Esophagus muscularis mucosa (tissue), 4 donors: ENCODE measurements at regions of chr2 and their contacts with region 1.

Region 1: DNA sequence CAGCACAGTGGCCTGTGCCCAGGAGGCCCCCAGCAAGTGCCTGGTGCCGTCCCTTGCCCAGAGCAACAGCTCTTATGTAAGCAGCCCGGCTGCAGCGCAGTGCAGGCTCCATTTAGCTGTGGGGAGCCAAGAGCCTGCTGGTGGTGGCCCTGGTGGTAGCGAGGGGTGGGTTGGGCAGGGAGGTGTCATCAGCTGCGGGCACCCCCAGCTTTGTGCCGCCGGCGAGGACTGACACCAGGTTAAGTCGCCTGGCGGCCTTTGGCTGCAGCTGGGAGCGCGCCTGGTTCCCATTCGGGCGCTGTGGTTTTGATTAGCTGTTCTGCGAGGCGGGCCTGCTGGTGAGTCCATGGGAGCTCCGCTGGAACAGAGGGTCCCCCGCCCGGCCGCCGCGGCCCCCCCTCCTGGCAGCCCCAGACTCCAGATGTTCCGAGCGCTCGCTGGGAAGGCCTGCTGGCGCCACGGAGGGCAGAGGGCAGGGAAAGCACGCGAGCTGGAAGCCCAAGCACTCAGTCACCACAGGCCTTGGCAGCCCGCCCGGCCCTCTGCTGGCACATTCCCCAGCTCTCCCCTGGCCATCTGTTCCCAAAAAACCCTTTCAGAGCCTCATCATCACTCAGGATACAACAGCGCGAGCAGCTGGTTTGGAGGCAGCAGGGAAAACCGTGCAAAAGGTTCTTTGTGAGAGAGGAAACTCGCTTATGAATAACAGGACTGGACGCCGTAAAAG is 18.4 kb downstream of the ATOH8 start:
- DNase-seq: peak; percentile 99
- H3K4me3 ChIP-seq: peak overlapping the region; percentile 29 to 42 (median 40)
- H3K27ac ChIP-seq: peak overlapping the region; percentile 80 to 91 (median 84)
- H3K4me1 ChIP-seq: peaks cover 93 to 99% (median 97%) of the 10 kb centered on the region in 4 donors
- H3K27me3 ChIP-seq: no peaks in the 10 kb centered on the region
- CTCF ChIP-seq: peak in 2 of 3 experiments; percentile 2 to 26
- EP300 ChIP-seq: peak; percentile 84
- POLR2A ChIP-seq: peak; percentile 24

Region 2: GRCh38 chr2:85707304-85707703 is 64.9 kb before region 1 on chr2:
- intact Hi-C with region 1: no loop called
- DNase-seq: no peak
- H3K4me3 ChIP-seq: no peak overlapping the region
- H3K27ac ChIP-seq: peak overlapping the region; percentile 30 to 72 (median 70)
- H3K4me1 ChIP-seq: peaks cover 42 to 71% (median 60%) of the 10 kb centered on the region in 4 donors
- H3K27me3 ChIP-seq: peaks cover 0 to 3% (median 0%) of the 10 kb centered on the region in 4 donors
- CTCF ChIP-seq: peak; percentile 77 to 88 (median 85)
- EP300 ChIP-seq: no peak
- POLR2A ChIP-seq: no peak

Region 3: GRCh38 chr2:85748039-85748734 is 24.0 kb before region 1 on chr2:
- intact Hi-C with region 1: loop called (anchors 2 kb)
- DNase-seq: no peak
- H3K4me3 ChIP-seq: no peak overlapping the region
- H3K27ac ChIP-seq: peak overlapping the region in 3 of 4 donors; percentile 65 to 85 (median 78)
- H3K4me1 ChIP-seq: peaks cover 78 to 96% (median 87%) of the 10 kb centered on the region in 4 donors
- H3K27me3 ChIP-seq: no peaks in the 10 kb centered on the region
- CTCF ChIP-seq: no peak
- EP300 ChIP-seq: no peak
- POLR2A ChIP-seq: no peak